GM13976 (cell line): ENCODE measurements at regions of chr1 and their contacts with region 1.

Region 1: GRCh38 chr1:31663622-31664452 is 19.2 kb upstream of the PEF1 start:
- DNase-seq: peak; percentile 88
- CTCF ChIP-seq: peak; percentile 94

Region 2: GRCh38 chr1:31789259-31790065 is 125.6 kb after region 1 on chr1:
- in situ Hi-C with region 1: loop called (anchors 10 kb)
- DNase-seq: peak; percentile 98
- CTCF ChIP-seq: peak; percentile 99

Region 3: DNA sequence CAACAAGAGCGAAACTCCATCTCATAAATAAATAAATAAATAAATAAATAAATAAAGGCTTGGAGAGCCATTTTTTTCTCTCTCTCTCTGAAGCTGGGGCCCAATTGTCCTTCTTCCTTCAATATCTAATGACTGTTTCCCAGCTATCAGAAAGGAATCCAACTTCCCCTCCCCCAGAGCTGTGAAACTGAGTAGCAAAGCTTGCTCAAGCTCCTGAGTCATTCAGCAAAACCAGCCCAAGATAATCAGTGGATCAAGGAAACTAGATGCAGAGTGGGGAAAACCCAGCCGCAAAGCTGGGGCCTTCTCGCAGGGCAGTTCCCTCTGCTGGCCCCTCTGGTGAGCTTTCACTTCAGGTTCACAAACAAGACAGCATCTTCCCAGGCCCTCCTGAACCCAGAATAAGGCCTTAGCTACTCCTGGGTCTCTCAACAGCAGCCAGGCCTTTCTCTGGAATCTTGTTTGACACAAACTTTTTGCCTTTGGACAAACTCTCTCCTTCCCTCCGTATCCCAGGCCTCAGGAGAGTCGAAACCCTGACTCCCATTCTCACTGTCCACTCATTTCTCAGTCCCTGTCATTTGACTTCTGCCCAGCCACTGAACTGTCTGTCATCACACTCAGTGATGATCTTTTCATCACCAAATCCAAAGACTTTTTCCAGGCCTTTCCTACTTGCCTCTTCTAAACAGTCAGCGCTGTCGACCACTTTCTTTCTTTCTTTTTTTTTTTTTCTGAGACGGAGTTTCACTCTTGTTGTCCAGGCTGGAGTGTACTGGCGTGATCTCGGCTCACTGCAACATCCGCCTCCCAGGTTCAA is 292.3 kb after region 1 on chr1:
- in situ Hi-C with region 1: loop called (anchors 25 kb)
- DNase-seq: peak; percentile 81
- CTCF ChIP-seq: peak; percentile 24